ENCODE measurements at regions of chr4 and their contacts with region 1.

Region 1: GRCh38 chr4:119286377-119287002 is 35.4 kb downstream of the FABP2 start:
- DNase-seq: peak in 3 of 5 donors; percentile 29 to 54 (median 45)
- ATAC-seq: peak; percentile 35 to 77 (median 62)
- H3K4me3 ChIP-seq: no peak overlapping the region
- H3K27ac ChIP-seq: peak overlapping the region in 9 of 12 donors; percentile 18 to 72 (median 50)
- H3K4me1 ChIP-seq: peaks cover 3 to 47% (median 20%) of the 10 kb centered on the region in 12 donors
- H3K27me3 ChIP-seq: no peaks in the 10 kb centered on the region
- CTCF ChIP-seq: peak; percentile 45 to 81 (median 70)
- POLR2A ChIP-seq: no peak

Region 2: GRCh38 chr4:118765399-118765798 is 521.1 kb before region 1 on chr4:
- intact Hi-C with region 1: loop called in 2 of 10 experiments (anchors 10 kb)
- DNase-seq: no peak
- ATAC-seq: peak; percentile 80 to 93 (median 86)
- H3K4me3 ChIP-seq: no peak overlapping the region
- H3K27ac ChIP-seq: peak overlapping the region; percentile 18 to 87 (median 72)
- H3K4me1 ChIP-seq: peaks cover 4 to 83% (median 57%) of the 10 kb centered on the region in 12 donors
- H3K27me3 ChIP-seq: no peaks in the 10 kb centered on the region
- CTCF ChIP-seq: no peak
- POLR2A ChIP-seq: no peak

Region 3: DNA sequence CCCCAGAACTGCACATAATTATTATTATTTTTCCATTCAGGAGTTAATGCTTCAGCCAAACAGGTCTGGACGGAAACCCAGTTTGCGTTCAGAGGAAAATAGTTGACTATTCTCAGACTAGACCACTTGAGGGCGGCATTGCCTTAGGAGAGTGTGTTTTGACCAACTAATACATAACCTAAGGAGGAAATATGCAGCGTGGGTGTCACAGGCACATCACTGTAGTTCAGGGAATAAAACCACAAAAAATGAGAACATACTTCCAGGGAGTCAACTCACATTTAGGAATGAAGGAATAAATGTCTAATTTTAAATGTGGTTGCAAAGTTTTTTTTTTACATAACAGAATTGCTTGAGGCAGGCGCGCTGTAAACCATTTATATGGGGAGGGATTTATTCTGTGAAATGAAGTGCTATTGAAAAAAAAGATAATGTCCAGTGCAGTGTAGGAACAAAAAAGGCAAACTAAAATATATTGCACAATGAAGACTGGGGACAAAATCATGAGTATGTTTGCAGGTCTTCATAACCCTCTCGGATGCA is 304.6 kb before region 1 on chr4:
- intact Hi-C with region 1: loop called (anchors 1 to 5 kb)
- DNase-seq: peak in 4 of 5 donors; percentile 59 to 74 (median 67)
- ATAC-seq: peak; percentile 69 to 81 (median 77)
- H3K4me3 ChIP-seq: peak overlapping the region in 1 of 12 donors; percentile 6
- H3K27ac ChIP-seq: peak overlapping the region in 9 of 12 donors; percentile 18 to 87 (median 59)
- H3K4me1 ChIP-seq: peaks cover 3 to 86% (median 48%) of the 10 kb centered on the region in 12 donors
- H3K27me3 ChIP-seq: no peaks in the 10 kb centered on the region
- CTCF ChIP-seq: peak; percentile 58 to 83 (median 74)
- POLR2A ChIP-seq: no peak

Region 4: DNA sequence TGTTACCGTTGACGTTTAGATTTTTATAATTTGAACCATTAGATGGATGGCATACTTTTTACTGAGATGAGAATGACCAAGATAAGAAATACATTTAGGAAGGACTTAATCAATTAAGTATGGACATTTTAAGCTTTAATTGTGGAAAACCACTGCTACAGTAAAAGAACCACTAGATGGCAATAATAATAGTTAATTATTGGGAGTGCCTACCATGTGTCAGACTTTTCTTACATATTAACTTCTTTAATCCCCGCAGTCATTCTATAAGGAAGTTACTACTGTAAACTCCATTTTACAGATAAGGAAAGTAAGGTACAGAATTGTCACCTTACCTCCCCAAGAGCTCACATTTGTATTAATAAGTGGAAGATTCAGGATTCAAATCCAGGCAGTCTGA is 199.4 kb before region 1 on chr4:
- intact Hi-C with region 1: loop called in 2 of 10 experiments (anchors 5 to 10 kb)
- DNase-seq: no peak
- ATAC-seq: peak in 2 of 4 donors; percentile 32 to 58
- H3K4me3 ChIP-seq: no peak overlapping the region
- H3K27ac ChIP-seq: peak overlapping the region in 5 of 12 donors; percentile 14 to 31 (median 24)
- H3K4me1 ChIP-seq: peaks cover 0 to 10% (median 0%) of the 10 kb centered on the region in 12 donors
- H3K27me3 ChIP-seq: no peaks in the 10 kb centered on the region
- CTCF ChIP-seq: peak in 11 of 12 donors; percentile 7 to 55 (median 39)
- POLR2A ChIP-seq: no peak

Region 5: DNA sequence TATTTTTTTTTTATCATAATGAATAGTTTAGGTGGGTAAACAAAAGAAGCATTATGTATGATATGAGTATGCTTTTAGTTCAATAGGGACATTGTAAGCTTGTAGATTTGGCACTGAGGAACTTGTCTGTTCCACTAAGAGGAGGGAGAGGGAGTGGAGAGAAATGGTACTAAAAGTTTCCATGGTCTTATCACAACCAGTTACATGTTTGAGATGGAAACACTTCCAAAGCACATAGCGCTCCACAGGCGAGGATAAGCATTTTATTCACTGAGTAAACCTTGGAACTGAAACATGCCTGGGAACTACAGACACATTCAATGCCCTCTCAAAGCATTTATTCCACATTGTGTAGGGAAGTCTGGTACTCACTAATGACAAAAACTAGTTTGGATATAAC is 135.3 kb before region 1 on chr4:
- intact Hi-C with region 1: loop called in 1 of 10 experiments (anchors 10 kb)
- DNase-seq: peak in 2 of 5 donors; percentile 27 to 34
- ATAC-seq: peak; percentile 86 to 97 (median 90)
- H3K4me3 ChIP-seq: no peak overlapping the region
- H3K27ac ChIP-seq: peak overlapping the region; percentile 32 to 88 (median 71)
- H3K4me1 ChIP-seq: peaks cover 0 to 69% (median 16%) of the 10 kb centered on the region in 12 donors
- H3K27me3 ChIP-seq: no peaks in the 10 kb centered on the region
- CTCF ChIP-seq: peak in 2 of 12 donors; percentile 18 to 25
- POLR2A ChIP-seq: peak in 1 of 2 donors; percentile 20

Region 6: GRCh38 chr4:119212234-119212963 is 74.1 kb before region 1 on chr4 and contains the start of gene USP53:
- intact Hi-C with region 1: loop called in 3 of 10 experiments (anchors 5 to 10 kb)
- DNase-seq: peak; percentile 95 to 98 (median 97)
- ATAC-seq: peak; percentile 96 to 98 (median 98)
- H3K4me3 ChIP-seq: peak within 1 kb of the TSS; percentile 50 to 93 (median 83)
- H3K27ac ChIP-seq: peak within 1 kb of the TSS; percentile 88 to 99 (median 96)
- H3K4me1 ChIP-seq: peaks cover 0 to 46% (median 15%) of the 10 kb centered on the region in 12 donors
- H3K27me3 ChIP-seq: no peaks in the 10 kb centered on the region
- CTCF ChIP-seq: no peak
- POLR2A ChIP-seq: peak in 1 of 2 donors; percentile 92
- total RNA-seq, gene USP53: 32.9 to 52.9 (median 43.7) TPM

Region 7: DNA sequence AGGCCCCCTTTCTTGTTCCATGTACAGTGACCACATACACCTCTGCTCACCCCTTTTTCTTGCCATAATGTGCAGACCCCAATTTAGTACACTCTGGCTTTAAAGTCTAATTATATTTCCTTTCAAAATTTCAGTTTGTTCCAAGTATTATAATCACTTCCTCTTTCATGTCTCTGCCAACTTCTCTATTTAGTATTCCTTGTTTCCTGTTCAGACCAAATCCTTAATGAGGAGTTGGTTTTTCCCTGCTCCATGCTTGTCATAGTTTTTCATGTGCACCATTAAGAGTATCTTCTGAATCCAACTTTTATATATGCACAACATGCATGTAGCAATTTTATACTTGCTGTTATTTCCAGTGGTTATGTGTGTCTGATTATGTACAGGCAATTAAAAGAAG is 41.7 kb before region 1 on chr4:
- intact Hi-C with region 1: loop called in 2 of 10 experiments (anchors 5 kb)
- DNase-seq: no peak
- ATAC-seq: peak in 2 of 4 donors; percentile 19 to 35
- H3K4me3 ChIP-seq: no peak overlapping the region
- H3K27ac ChIP-seq: peak overlapping the region in 2 of 12 donors; percentile 4 to 6
- H3K4me1 ChIP-seq: peaks cover 0 to 33% (median 13%) of the 10 kb centered on the region in 12 donors
- H3K27me3 ChIP-seq: no peaks in the 10 kb centered on the region
- CTCF ChIP-seq: no peak
- POLR2A ChIP-seq: no peak